ENCODE measurements at regions of chr16 and their contacts with region 1.

Region 1: DNA sequence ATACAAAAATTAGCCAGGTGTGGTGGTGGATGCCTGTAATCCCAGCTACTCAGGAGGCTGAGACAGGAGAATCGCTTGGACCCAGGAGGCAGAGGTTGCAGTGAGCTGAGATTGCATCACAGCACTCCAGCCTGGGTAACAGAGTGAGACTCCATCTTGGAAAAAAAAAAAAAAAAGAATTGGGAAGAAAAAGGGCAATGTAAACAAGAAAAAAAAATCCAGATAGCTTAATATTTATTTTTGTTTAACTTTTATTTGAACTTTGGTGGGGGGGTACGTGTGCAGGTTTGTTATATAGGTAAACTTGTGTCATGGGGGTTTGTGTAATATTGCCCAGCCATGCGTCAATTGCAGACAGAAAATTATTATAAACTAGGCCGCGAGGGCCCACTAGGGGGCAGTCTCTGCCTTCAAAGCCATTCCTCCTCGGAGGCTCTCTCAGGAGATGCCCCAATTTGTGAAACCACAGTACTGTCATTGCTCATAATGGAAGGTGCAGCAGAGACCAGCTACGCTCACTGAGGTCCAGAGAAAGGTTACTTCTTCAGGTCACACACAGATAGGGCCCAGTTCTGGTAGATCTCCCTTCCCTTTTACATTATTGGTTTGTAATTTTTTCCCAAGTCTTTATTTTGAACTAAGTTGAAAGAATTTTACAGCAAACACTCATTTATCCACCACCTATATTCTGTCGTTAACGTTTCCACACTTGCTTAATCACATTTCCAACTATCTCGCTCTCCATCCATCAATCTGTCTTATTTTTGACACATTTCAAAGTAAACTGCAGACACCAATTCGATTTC is 206.2 kb downstream of the PRKCB start:
- DNase-seq: peak; percentile 79
- H3K4me3 ChIP-seq: no peak overlapping the region
- H3K27ac ChIP-seq: no peak overlapping the region
- H3K4me1 ChIP-seq: no peaks in the 10 kb centered on the region
- CTCF ChIP-seq: peak; percentile 92

Region 2: GRCh38 chr16:23734176-23734893 is 307.7 kb before region 1 on chr16:
- CTCF ChIA-PET with region 1: interaction called, 12 read pairs
- POLR2A ChIA-PET with region 1: no interaction called
- intact Hi-C with region 1: loop called (anchors 5 kb)
- DNase-seq: no peak
- H3K4me3 ChIP-seq: no peak overlapping the region
- H3K27ac ChIP-seq: no peak overlapping the region
- H3K4me1 ChIP-seq: no peaks in the 10 kb centered on the region
- CTCF ChIP-seq: no peak

Region 3: DNA sequence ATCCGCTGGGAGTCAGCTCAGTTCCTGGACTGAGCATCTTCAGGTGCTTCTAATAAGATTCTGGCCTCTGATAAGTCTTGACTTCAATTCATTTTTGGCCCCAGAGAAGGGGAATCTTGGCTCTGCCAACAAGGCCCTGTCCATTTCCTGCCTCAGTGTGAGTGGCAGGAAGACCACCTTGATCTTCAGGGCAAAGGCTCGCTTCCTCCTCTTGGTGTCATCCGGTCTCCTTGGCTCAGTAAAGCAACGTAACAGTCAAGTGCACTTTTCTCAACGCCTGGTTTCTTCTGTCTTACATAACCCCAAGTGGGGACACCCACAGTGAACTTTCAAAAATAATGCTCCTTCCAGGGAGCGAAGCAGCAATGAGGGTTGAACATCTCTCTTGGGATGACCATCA is 36.5 kb before region 1 on chr16:
- CTCF ChIA-PET with region 1: no interaction called
- POLR2A ChIA-PET with region 1: no interaction called
- intact Hi-C with region 1: no loop called
- DNase-seq: no peak
- H3K4me3 ChIP-seq: no peak overlapping the region
- H3K27ac ChIP-seq: no peak overlapping the region
- H3K4me1 ChIP-seq: peaks cover 15% of the 10 kb centered on the region
- CTCF ChIP-seq: no peak

Region 4: GRCh38 chr16:24253192-24253591 is 211.2 kb after region 1 on chr16:
- CTCF ChIA-PET with region 1: interaction called, 4 read pairs
- POLR2A ChIA-PET with region 1: no interaction called
- intact Hi-C with region 1: loop called (anchors 1 kb)
- DNase-seq: peak; percentile 78
- H3K4me3 ChIP-seq: no peak overlapping the region
- H3K27ac ChIP-seq: no peak overlapping the region
- H3K4me1 ChIP-seq: peaks cover 35% of the 10 kb centered on the region
- CTCF ChIP-seq: peak; percentile 86

Region 5: GRCh38 chr16:24367186-24367710 is 325.2 kb after region 1 on chr16:
- CTCF ChIA-PET with region 1: no interaction called
- POLR2A ChIA-PET with region 1: no interaction called
- intact Hi-C with region 1: no loop called
- DNase-seq: no peak
- H3K4me3 ChIP-seq: no peak overlapping the region
- H3K27ac ChIP-seq: no peak overlapping the region
- H3K4me1 ChIP-seq: no peaks in the 10 kb centered on the region
- CTCF ChIP-seq: no peak

Region 6: GRCh38 chr16:24504472-24505345 is 462.7 kb after region 1 on chr16:
- CTCF ChIA-PET with region 1: interaction called, 3 read pairs
- POLR2A ChIA-PET with region 1: no interaction called
- intact Hi-C with region 1: loop called (anchors 1 kb)
- DNase-seq: peak; percentile 70
- H3K4me3 ChIP-seq: no peak overlapping the region
- H3K27ac ChIP-seq: no peak overlapping the region
- H3K4me1 ChIP-seq: no peaks in the 10 kb centered on the region
- CTCF ChIP-seq: peak; percentile 86

Measured in OCI-LY7 (cell line).